Activated naive CD8-positive, alpha-beta T cell treated with anti-CD3 and anti-CD28 coated beads, Interleukin-2, amount 10 ng/mL, durations not matched to agents 7 days and 5 days (primary cell): ENCODE measurements at regions of chr12 and their contacts with region 1.

Region 1: GRCh38 chr12:57604454-57604991 is at the start of gene DTX3:
- DNase-seq: peak; percentile 59
- ATAC-seq: peak; percentile 67
- H3K4me3 Mint-ChIP-seq: peak within 1 kb of the TSS; percentile 84
- H3K27ac Mint-ChIP-seq: peak within 1 kb of the TSS; percentile 88
- H3K4me1 Mint-ChIP-seq: peaks cover 17% of the 10 kb centered on the region
- H3K27me3 Mint-ChIP-seq: no peaks in the 10 kb centered on the region
- total RNA-seq, gene DTX3: 31.5 to 32.8 TPM

Region 2: DNA sequence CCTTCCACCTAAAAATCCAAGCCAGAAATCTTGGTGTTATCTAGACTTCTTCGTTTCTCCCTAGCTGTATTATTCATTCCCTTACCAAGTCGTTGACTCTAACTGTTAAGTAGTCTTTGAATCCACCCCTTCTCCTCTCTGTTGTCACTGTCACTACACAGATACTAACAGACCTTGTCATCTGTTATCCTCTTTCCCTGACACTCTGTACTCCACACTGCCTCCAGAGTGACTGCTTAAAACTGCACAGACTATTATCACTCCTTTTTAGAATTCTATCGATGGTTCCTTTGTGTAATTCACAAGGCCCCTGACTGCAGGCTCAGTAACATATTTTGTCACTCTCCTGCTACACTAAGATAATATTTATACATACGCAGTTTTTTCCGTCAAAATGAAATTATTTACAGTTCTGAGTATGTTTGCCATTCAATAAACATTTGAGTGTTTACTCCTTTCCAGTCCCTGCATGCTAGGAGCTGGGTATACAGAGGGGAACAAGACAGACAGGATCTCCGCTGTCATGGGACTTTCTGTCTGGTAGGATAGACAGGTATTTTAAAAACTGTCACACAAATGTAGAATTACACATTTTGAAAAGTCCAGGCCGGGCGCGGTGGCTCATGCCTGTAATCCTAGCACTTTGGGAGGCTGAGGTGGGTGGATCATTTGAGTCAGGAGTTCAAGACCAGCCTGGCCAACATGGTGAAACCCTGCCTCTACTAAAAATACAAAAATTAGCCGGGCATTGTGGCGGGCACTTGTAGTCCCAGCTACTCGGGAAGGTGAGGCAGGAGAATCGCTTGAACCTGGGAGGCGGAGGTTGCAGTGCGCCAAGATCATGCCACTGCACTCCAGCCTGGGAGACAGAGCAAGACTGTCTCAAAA is 112.9 kb before region 1 on chr12:
- POLR2A ChIA-PET with region 1: no interaction called
- DNase-seq: no peak
- ATAC-seq: no peak
- H3K4me3 Mint-ChIP-seq: no peak overlapping the region
- H3K27ac Mint-ChIP-seq: peak overlapping the region; percentile 45
- H3K4me1 Mint-ChIP-seq: peaks cover 31% of the 10 kb centered on the region
- H3K27me3 Mint-ChIP-seq: no peaks in the 10 kb centered on the region

Region 3: GRCh38 chr12:57590536-57591479 is 13.7 kb before region 1 on chr12 and contains the start of gene PIP4K2C:
- POLR2A ChIA-PET with region 1: interaction called, 10 read pairs
- DNase-seq: peak; percentile 85
- ATAC-seq: peak; percentile 93
- H3K4me3 Mint-ChIP-seq: peak within 1 kb of the TSS; percentile 89
- H3K27ac Mint-ChIP-seq: peak within 1 kb of the TSS; percentile 82
- H3K4me1 Mint-ChIP-seq: peaks cover 21% of the 10 kb centered on the region
- H3K27me3 Mint-ChIP-seq: peaks cover 2% of the 10 kb centered on the region
- total RNA-seq, gene PIP4K2C: 21.6 to 24.1 TPM

Region 4: GRCh38 chr12:57712701-57713100 is 108.2 kb after region 1 on chr12:
- POLR2A ChIA-PET with region 1: no interaction called
- DNase-seq: no peak
- ATAC-seq: no peak
- H3K4me3 Mint-ChIP-seq: no peak overlapping the region
- H3K27ac Mint-ChIP-seq: peak overlapping the region; percentile 64
- H3K4me1 Mint-ChIP-seq: peaks cover 5% of the 10 kb centered on the region
- H3K27me3 Mint-ChIP-seq: no peaks in the 10 kb centered on the region